Vagina (tissue), 2 donors: ENCODE measurements at regions of chr1 and their contacts with region 1.

Region 1: GRCh38 chr1:153568367-153569099 is 2.9 kb upstream of the S100A2 start:
- DNase-seq: peak in 1 of 2 donors; percentile 92
- H3K4me3 ChIP-seq: peak overlapping the region; percentile 22 to 28
- H3K27ac ChIP-seq: peak overlapping the region; percentile 98
- H3K4me1 ChIP-seq: peaks cover 41% of the 10 kb centered on the region
- H3K27me3 ChIP-seq: no peaks in the 10 kb centered on the region
- CTCF ChIP-seq: peak; percentile 99 to 100 (median 100)
- POLR2A ChIP-seq: peak in 1 of 2 donors; percentile 4

Region 2: GRCh38 chr1:153510984-153511410 is 57.5 kb before region 1 on chr1:
- intact Hi-C with region 1: loop called (anchors 5 kb)
- DNase-seq: no peak
- H3K4me3 ChIP-seq: no peak overlapping the region
- H3K27ac ChIP-seq: peak overlapping the region; percentile 61
- H3K4me1 ChIP-seq: peaks cover 29% of the 10 kb centered on the region
- H3K27me3 ChIP-seq: no peaks in the 10 kb centered on the region
- CTCF ChIP-seq: peak; percentile 77 to 93 (median 91)
- POLR2A ChIP-seq: no peak

Region 3: GRCh38 chr1:153532769-153533599 is 35.5 kb before region 1 on chr1:
- intact Hi-C with region 1: loop called (anchors 1 kb)
- DNase-seq: peak in 1 of 2 donors; percentile 96
- H3K4me3 ChIP-seq: peak overlapping the region; percentile 96 to 99
- H3K27ac ChIP-seq: peak overlapping the region; percentile 100
- H3K4me1 ChIP-seq: peaks cover 61% of the 10 kb centered on the region
- H3K27me3 ChIP-seq: no peaks in the 10 kb centered on the region
- CTCF ChIP-seq: peak; percentile 85 to 96 (median 92)
- POLR2A ChIP-seq: peak in 1 of 2 donors; percentile 37

Region 4: GRCh38 chr1:153598309-153599172 is 30.0 kb after region 1 on chr1:
- intact Hi-C with region 1: no loop called
- DNase-seq: no peak
- H3K4me3 ChIP-seq: no peak overlapping the region
- H3K27ac ChIP-seq: no peak overlapping the region
- H3K4me1 ChIP-seq: no peaks in the 10 kb centered on the region
- H3K27me3 ChIP-seq: no peaks in the 10 kb centered on the region
- CTCF ChIP-seq: no peak
- POLR2A ChIP-seq: no peak